ENCODE measurements at regions of chr5 and their contacts with region 1.

Region 1: GRCh38 chr5:74476046-74476818 is 164.3 kb downstream of the ENC1 start:
- DNase-seq: no peak
- H3K4me3 ChIP-seq: no peak overlapping the region
- H3K27ac ChIP-seq: peak overlapping the region in 32 of 59 donors; percentile 0 to 64 (median 46)
- H3K27me3 ChIP-seq: no peaks in the 10 kb centered on the region
- CTCF ChIP-seq: no peak

Region 2: GRCh38 chr5:74608736-74609601 is 132.7 kb after region 1 on chr5:
- intact Hi-C with region 1: loop called in 1 of 2 experiments (anchors 10 kb)
- DNase-seq: no peak
- H3K4me3 ChIP-seq: no peak overlapping the region
- H3K27ac ChIP-seq: peak overlapping the region in 18 of 59 donors; percentile 6 to 53 (median 34)
- H3K27me3 ChIP-seq: no peaks in the 10 kb centered on the region
- CTCF ChIP-seq: no peak